OCI-LY7 (cell line): ENCODE measurements at regions of chr10 and their contacts with region 1.

Region 1: GRCh38 chr10:125795128-125795527 is 19.5 kb upstream of the MMP21 start:
- DNase-seq: no peak
- H3K4me3 ChIP-seq: no peak overlapping the region
- H3K27ac ChIP-seq: peak overlapping the region; percentile 77
- H3K4me1 ChIP-seq: peaks cover 46% of the 10 kb centered on the region
- CTCF ChIP-seq: no peak

Region 2: GRCh38 chr10:125599194-125599593 is 195.9 kb before region 1 on chr10:
- CTCF ChIA-PET with region 1: no interaction called
- POLR2A ChIA-PET with region 1: no interaction called
- intact Hi-C with region 1: no loop called
- DNase-seq: no peak
- H3K4me3 ChIP-seq: no peak overlapping the region
- H3K27ac ChIP-seq: no peak overlapping the region
- H3K4me1 ChIP-seq: no peaks in the 10 kb centered on the region
- CTCF ChIP-seq: no peak

Region 3: GRCh38 chr10:125684581-125684980 is 110.5 kb before region 1 on chr10:
- CTCF ChIA-PET with region 1: no interaction called
- POLR2A ChIA-PET with region 1: no interaction called
- intact Hi-C with region 1: no loop called
- DNase-seq: no peak
- H3K4me3 ChIP-seq: no peak overlapping the region
- H3K27ac ChIP-seq: no peak overlapping the region
- H3K4me1 ChIP-seq: no peaks in the 10 kb centered on the region
- CTCF ChIP-seq: no peak

Region 4: GRCh38 chr10:125783957-125784356 is 11.2 kb before region 1 on chr10:
- CTCF ChIA-PET with region 1: interaction called, 3 read pairs
- POLR2A ChIA-PET with region 1: interaction called, 27 read pairs
- intact Hi-C with region 1: no loop called
- DNase-seq: peak; percentile 21
- H3K4me3 ChIP-seq: no peak overlapping the region
- H3K27ac ChIP-seq: no peak overlapping the region
- H3K4me1 ChIP-seq: peaks cover 18% of the 10 kb centered on the region
- CTCF ChIP-seq: no peak

Region 5: DNA sequence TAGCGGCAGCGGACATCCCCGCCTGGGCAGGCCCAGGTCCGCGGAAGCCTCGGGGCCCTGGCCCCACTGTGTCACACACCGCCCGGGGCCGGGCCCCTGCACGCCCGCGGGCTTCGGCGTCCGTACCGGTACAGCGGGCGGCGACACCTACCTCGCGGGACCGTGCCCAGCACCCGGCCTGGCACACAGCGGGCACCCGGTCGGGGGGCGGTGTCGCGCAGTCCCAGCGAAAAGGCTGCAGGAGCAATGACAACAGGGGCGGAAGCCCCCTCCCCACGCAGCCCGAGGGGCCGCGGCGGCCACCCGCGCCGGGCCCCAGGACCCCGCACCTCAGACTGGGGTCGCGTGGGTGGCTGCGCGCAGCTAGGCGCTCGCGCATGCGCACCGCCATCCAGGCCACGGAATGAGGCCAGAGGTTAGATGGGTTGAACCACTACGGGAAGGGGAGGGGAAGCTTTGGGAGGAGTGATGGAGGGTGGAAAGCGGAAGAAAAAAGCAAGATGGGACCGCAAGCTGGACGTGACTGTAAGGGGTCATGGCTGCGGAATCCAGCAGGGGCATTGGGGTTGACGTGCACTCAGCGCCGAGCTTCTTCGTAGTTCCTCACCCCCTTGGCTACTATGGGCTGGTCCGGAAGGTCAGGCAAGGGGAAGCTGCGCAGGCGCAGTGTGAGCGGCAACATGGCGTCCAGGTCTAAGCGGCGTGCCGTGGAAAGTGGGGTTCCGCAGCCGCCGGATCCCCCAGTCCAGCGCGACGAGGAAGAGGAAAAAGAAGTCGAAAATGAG is 27.9 kb after region 1 on chr10 and contains the starts of genes BCCIP and UROS:
- CTCF ChIA-PET with region 1: no interaction called
- POLR2A ChIA-PET with region 1: interaction called, 11 read pairs
- intact Hi-C with region 1: no loop called
- DNase-seq: peak; percentile 96
- H3K4me3 ChIP-seq: peak within 1 kb of the TSS; percentile 77
- H3K27ac ChIP-seq: peak within 1 kb of the TSS; percentile 53
- H3K4me1 ChIP-seq: peaks cover 32% of the 10 kb centered on the region
- CTCF ChIP-seq: no peak
- total RNA-seq, gene BCCIP: 59.1 and 61.4 TPM in 2 replicates
- total RNA-seq, gene UROS: 37.3 and 39.7 TPM in 2 replicates

Region 6: DNA sequence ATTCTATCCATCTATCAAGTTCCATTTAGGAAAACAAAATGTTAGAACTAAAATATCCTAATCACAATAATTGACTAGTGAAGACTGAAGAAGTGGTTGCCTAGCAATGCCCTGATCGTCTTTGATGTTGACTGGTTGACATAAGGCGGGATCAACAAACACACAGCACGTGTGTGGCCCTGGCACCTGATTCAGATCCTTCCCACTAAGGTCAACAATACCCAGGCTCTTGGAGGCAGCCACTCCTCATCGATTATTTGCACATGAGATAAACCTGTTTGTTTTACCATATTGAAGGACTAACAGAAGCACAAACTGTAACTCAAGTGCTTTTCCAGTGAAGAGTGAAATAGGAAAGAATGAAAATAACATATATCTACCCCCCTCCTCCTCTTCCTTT is 116.8 kb after region 1 on chr10:
- CTCF ChIA-PET with region 1: no interaction called
- POLR2A ChIA-PET with region 1: no interaction called
- intact Hi-C with region 1: no loop called
- DNase-seq: no peak
- H3K4me3 ChIP-seq: no peak overlapping the region
- H3K27ac ChIP-seq: no peak overlapping the region
- H3K4me1 ChIP-seq: no peaks in the 10 kb centered on the region
- CTCF ChIP-seq: no peak